Activated naive CD4-positive, alpha-beta T cell treated with anti-CD3 and anti-CD28 coated beads for 36 hours (primary cell): ENCODE measurements at regions of chr4 and their contacts with region 1.

Region 1: DNA sequence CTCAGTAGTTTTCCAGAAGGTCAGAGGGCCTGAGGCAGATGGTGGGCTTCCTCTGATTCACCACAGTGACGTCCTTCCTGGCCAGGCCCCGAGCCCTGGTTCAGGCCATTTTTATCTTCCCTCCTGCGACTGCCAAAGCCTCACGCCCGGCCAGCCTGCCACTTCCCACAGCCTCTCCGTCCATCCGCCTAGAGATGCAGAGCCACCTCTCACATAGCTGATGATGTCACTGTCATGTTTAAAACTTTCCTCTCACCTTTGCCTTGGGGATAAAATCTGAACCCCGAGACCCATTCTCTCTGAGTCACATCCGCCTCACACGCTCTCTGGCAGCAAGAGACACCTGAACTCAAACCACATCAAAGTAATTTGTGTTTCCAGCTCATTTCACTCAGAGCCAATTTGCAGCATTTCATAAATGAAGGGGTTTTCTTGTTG is 175.3 kb downstream of the QDPR start:
- DNase-seq: peak; percentile 88
- H3K4me3 Mint-ChIP-seq: peak overlapping the region; percentile 22
- H3K27ac Mint-ChIP-seq: peak overlapping the region; percentile 87
- H3K4me1 Mint-ChIP-seq: peaks cover 50% of the 10 kb centered on the region
- H3K27me3 Mint-ChIP-seq: no peaks in the 10 kb centered on the region

Region 2: GRCh38 chr4:15771216-15772058 is 1565.1 kb before region 1 on chr4:
- CTCF ChIA-PET with region 1: no interaction called
- intact Hi-C with region 1: loop called (anchors 5 kb)
- DNase-seq: peak; percentile 57
- H3K4me3 Mint-ChIP-seq: peak overlapping the region; percentile 41
- H3K27ac Mint-ChIP-seq: no peak overlapping the region
- H3K4me1 Mint-ChIP-seq: peaks cover 69% of the 10 kb centered on the region
- H3K27me3 Mint-ChIP-seq: peaks cover 8% of the 10 kb centered on the region

Region 3: GRCh38 chr4:16893141-16893651 is 443.3 kb before region 1 on chr4:
- CTCF ChIA-PET with region 1: no interaction called
- intact Hi-C with region 1: loop called (anchors 1 kb)
- DNase-seq: peak; percentile 53
- H3K4me3 Mint-ChIP-seq: peak overlapping the region; percentile 15
- H3K27ac Mint-ChIP-seq: peak overlapping the region; percentile 13
- H3K4me1 Mint-ChIP-seq: peaks cover 42% of the 10 kb centered on the region
- H3K27me3 Mint-ChIP-seq: peaks cover 2% of the 10 kb centered on the region

Region 4: DNA sequence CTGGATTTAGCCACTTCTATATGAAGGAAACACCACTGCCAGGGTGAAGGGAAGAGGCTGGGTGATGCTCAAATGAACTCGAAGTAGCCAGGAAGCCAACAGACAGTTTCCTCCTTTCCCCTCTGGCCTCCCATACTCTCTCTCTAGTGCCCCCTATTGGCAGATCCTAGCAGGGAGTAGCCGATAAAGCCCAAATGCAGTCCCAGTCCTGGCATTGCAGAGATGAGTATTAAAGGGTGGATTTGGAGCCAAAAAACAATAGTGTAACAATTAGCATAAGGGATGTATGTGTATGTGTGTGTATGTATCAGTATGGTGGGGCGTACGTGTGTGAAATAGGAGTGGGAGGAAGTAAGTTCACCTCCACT is 224.3 kb before region 1 on chr4:
- CTCF ChIA-PET with region 1: no interaction called
- intact Hi-C with region 1: no loop called
- DNase-seq: peak; percentile 25
- H3K4me3 Mint-ChIP-seq: no peak overlapping the region
- H3K27ac Mint-ChIP-seq: no peak overlapping the region
- H3K4me1 Mint-ChIP-seq: no peaks in the 10 kb centered on the region
- H3K27me3 Mint-ChIP-seq: peaks cover 17% of the 10 kb centered on the region

Region 5: GRCh38 chr4:17324386-17324830 is 12.1 kb before region 1 on chr4:
- CTCF ChIA-PET with region 1: interaction called, 7 read pairs
- intact Hi-C with region 1: loop called (anchors 1 kb)
- DNase-seq: peak; percentile 71
- H3K4me3 Mint-ChIP-seq: peak overlapping the region; percentile 19
- H3K27ac Mint-ChIP-seq: no peak overlapping the region
- H3K4me1 Mint-ChIP-seq: peaks cover 17% of the 10 kb centered on the region
- H3K27me3 Mint-ChIP-seq: no peaks in the 10 kb centered on the region

Region 6: DNA sequence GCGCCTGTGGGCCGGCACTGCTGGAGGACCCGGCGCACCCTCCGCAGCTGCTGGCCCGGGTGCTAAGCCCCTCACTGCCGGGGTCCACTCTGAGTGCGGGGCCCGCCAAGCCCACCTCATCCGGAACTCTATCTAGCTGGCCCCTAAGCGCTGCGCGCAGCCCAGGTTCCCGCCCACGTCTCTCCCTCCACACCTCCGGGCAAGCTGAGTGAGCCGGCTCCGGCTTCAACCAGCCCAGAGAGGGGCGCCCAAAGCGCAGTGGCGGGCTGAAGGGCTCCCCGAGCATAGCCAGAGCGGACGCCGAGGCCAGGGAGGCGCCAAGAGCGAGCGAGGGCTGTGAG is 100.2 kb after region 1 on chr4:
- CTCF ChIA-PET with region 1: no interaction called
- intact Hi-C with region 1: no loop called
- DNase-seq: no peak
- H3K4me3 Mint-ChIP-seq: no peak overlapping the region
- H3K27ac Mint-ChIP-seq: no peak overlapping the region
- H3K4me1 Mint-ChIP-seq: no peaks in the 10 kb centered on the region
- H3K27me3 Mint-ChIP-seq: no peaks in the 10 kb centered on the region

Region 7: GRCh38 chr4:17576932-17577665 is 240.6 kb after region 1 on chr4 and contains the start of gene LAP3:
- CTCF ChIA-PET with region 1: no interaction called
- intact Hi-C with region 1: loop called (anchors 1 kb)
- DNase-seq: peak; percentile 99
- H3K4me3 Mint-ChIP-seq: peak within 1 kb of the TSS; percentile 89
- H3K27ac Mint-ChIP-seq: peak within 1 kb of the TSS; percentile 95
- H3K4me1 Mint-ChIP-seq: peaks cover 24% of the 10 kb centered on the region
- H3K27me3 Mint-ChIP-seq: no peaks in the 10 kb centered on the region
- total RNA-seq, gene LAP3: 109 to 111 TPM

Region 8: GRCh38 chr4:18021722-18022571 is 685.4 kb after region 1 on chr4 and contains the start of gene LCORL:
- CTCF ChIA-PET with region 1: no interaction called
- intact Hi-C with region 1: loop called (anchors 2 kb)
- DNase-seq: peak; percentile 89
- H3K4me3 Mint-ChIP-seq: peak within 1 kb of the TSS; percentile 98
- H3K27ac Mint-ChIP-seq: peak within 1 kb of the TSS; percentile 79
- H3K4me1 Mint-ChIP-seq: peaks cover 14% of the 10 kb centered on the region
- H3K27me3 Mint-ChIP-seq: peaks cover 16% of the 10 kb centered on the region
- total RNA-seq, gene LCORL: 8.6 to 9.4 TPM